ENCODE measurements at regions of chr13 and their contacts with region 1.

Region 1: GRCh38 chr13:45055198-45055901 is 65.0 kb upstream of the GTF2F2 start:
- DNase-seq: peak; percentile 94
- H3K4me3 ChIP-seq: peak overlapping the region in 2 of 3 experiments; percentile 7 to 24
- H3K27ac ChIP-seq: peak overlapping the region; percentile 95
- H3K4me1 ChIP-seq: peaks cover 26% of the 10 kb centered on the region
- H3K27me3 ChIP-seq: no peaks in the 10 kb centered on the region
- CTCF ChIP-seq: no peak

Region 2: DNA sequence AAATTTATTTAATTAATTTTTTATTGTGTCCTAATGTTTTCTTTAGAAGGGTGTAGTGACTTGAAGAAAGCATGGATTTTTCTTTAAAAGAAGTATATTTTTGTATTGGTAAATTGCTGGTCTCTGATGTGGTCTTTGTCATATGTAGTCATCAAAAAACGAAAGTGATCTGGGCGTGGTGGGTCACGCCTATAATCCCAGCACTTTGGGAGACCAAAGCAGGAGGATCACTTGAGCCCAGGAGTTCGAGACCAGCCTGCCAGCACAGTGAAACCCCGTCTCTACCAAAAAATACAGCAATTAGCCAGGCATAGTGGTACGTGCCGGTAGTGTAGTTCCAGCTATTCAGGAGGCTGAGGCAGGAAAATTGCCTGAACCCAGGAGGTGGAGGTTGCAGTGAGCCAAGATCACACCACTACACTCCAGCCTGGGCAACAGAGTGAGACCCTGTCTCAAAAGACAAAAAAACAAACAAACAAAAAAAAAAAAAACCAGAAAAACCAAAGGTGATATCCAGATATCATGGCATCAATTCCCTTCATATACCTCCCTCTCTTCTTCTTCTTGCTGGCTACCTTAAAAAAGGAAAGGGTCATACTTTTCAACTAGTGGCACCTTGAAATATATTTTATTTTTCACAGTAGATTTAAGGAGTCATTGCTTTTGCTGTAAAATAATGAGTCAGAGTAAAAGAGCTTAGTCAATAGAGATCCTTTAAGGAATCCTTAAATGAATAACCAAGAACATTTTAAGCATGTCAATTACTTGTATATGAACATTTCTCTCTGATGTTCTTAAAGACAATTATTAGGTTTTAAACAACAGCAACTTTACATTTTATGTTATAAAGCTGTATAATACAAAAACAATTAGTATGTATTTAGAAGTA is 125.6 kb after region 1 on chr13:
- CTCF ChIA-PET with region 1: no interaction called
- dilution Hi-C with region 1: no loop called
- in situ Hi-C with region 1: loop called in 1 of 2 experiments (anchors 10 kb)
- intact Hi-C with region 1: no loop called
- DNase-seq: no peak
- H3K4me3 ChIP-seq: no peak overlapping the region
- H3K27ac ChIP-seq: no peak overlapping the region
- H3K4me1 ChIP-seq: peaks cover 6% of the 10 kb centered on the region
- H3K27me3 ChIP-seq: peaks cover 1% of the 10 kb centered on the region
- CTCF ChIP-seq: no peak